A673 (cell line): ENCODE measurements at regions of chr6 and their contacts with region 1.

Region 1: DNA sequence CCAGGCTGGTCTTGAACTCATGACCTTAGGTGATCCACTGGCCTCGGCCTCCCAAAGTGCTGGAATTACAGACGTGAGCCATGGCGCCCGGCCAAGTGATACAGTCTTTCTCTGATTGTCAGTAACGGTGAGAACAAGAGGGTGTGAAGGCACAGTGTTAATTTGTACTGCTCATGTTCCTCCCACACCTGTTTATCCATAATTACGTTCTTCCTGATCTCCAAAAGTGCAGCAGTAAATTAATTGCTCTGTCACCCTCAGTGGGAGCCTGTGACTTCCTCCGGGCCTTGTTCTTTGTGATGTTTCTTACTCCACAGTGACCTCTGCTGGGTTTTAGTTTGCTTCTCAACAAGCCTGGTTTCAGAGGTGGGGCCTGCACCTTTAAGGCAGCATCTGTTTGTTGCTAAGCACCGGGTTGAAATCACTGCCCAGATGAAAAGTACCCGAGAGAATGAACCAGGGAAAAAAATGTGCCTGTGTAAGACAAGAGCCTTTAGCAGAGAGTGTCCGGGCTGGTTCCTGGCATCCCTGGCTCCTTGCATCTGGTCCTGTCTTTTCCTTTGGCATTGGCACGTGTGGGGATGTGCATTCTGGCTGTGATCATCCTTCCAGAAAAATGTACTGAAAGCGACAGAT is 89.1 kb upstream of the CLDN20 start:
- DNase-seq: peak; percentile 90
- H3K4me3 ChIP-seq: no peak overlapping the region
- H3K27ac ChIP-seq: no peak overlapping the region
- H3K4me1 ChIP-seq: peaks cover 25% of the 10 kb centered on the region
- H3K27me3 ChIP-seq: no peaks in the 10 kb centered on the region
- CTCF ChIP-seq: peak; percentile 72

Region 2: GRCh38 chr6:154868143-154868594 is 306.5 kb before region 1 on chr6:
- CTCF ChIA-PET with region 1: interaction called, 8 read pairs
- POLR2A ChIA-PET with region 1: no interaction called
- intact Hi-C with region 1: loop called (anchors 1 kb)
- DNase-seq: peak; percentile 77
- H3K4me3 ChIP-seq: no peak overlapping the region
- H3K27ac ChIP-seq: no peak overlapping the region
- H3K4me1 ChIP-seq: no peaks in the 10 kb centered on the region
- H3K27me3 ChIP-seq: no peaks in the 10 kb centered on the region
- CTCF ChIP-seq: peak; percentile 81

Region 3: GRCh38 chr6:155248008-155249001 is 73.6 kb after region 1 on chr6:
- CTCF ChIA-PET with region 1: interaction called, 28 read pairs
- POLR2A ChIA-PET with region 1: no interaction called
- intact Hi-C with region 1: loop called (anchors 1 kb)
- DNase-seq: peak; percentile 61
- H3K4me3 ChIP-seq: no peak overlapping the region
- H3K27ac ChIP-seq: no peak overlapping the region
- H3K4me1 ChIP-seq: no peaks in the 10 kb centered on the region
- H3K27me3 ChIP-seq: no peaks in the 10 kb centered on the region
- CTCF ChIP-seq: peak; percentile 74

Region 4: GRCh38 chr6:155314092-155314772 is 139.5 kb after region 1 on chr6 and contains the start of gene TFB1M:
- CTCF ChIA-PET with region 1: interaction called, 6 read pairs
- POLR2A ChIA-PET with region 1: no interaction called
- intact Hi-C with region 1: loop called (anchors 1 kb)
- DNase-seq: peak; percentile 100
- H3K4me3 ChIP-seq: peak within 1 kb of the TSS; percentile 86
- H3K27ac ChIP-seq: peak within 1 kb of the TSS; percentile 77
- H3K4me1 ChIP-seq: peaks cover 29% of the 10 kb centered on the region
- H3K27me3 ChIP-seq: no peaks in the 10 kb centered on the region
- CTCF ChIP-seq: no peak
- total RNA-seq, gene TFB1M: 40.3 and 47.6 TPM in 2 replicates